HAP-1 (cell line): ENCODE measurements at regions of chr4 and their contacts with region 1.

Region 1: DNA sequence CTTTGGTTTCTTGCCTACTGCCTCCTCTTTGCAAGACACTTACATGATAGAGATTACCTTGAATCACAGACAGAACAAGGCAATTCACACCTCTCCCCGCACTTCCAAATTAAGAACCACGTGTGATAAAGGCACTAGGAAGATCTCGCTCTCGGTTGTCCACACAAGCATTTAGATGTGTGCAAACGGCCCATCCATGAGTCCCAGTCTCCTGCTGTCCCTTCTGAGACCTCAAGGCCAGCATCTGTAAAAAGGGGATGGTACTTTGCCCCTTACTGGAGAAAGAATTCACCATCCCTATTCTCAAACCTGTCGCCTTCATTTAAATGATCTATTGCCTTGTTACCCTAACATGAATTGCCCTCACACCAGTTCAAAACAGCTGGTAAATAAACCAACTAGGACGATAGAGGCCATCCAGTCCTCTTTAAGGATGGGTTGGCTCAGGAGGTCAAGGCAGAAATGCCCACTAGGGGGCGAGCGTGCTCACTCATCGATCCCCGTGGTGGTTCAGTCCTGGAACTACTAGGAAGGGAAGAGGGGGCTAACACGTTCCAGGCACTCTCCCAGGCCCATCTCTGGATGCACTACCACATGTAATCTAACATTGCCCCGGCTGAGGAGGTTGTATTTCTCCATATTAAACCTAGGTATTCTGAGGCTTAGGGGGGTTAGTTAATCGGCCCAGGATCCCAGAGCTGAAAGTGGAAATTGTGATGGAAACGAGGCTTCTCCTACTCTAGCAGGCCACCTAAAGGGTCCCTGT is 95.8 kb downstream of the DHX15 start:
- DNase-seq: peak; percentile 54 to 89
- H3K4me3 ChIP-seq: no peak overlapping the region
- H3K4me1 ChIP-seq: no peaks in the 10 kb centered on the region
- H3K27me3 ChIP-seq: no peaks in the 10 kb centered on the region

Region 2: DNA sequence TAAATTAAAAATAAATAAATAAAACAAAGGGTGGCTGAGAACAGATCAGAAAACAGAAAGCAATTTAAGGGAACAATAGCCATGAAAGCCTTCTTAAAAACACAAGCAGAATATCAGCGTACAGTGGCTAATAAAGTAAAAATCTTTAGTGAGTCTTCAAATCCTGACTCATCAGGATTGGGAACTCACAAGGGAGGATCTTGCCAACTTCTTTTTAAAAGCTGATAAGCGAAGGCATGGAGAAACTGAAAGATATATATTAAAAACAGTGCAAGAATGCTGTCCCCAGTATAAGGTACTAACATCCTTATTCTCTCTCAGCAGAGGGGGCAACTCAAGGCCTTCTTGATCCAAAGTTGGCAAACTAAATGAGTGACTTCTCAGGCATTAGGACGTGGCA is 84.3 kb before region 1 on chr4:
- in situ Hi-C with region 1: no loop called
- DNase-seq: no peak
- H3K4me3 ChIP-seq: no peak overlapping the region
- H3K4me1 ChIP-seq: no peaks in the 10 kb centered on the region
- H3K27me3 ChIP-seq: peaks cover 2% of the 10 kb centered on the region; the same call in 1 of the 2 replicates

Region 3: DNA sequence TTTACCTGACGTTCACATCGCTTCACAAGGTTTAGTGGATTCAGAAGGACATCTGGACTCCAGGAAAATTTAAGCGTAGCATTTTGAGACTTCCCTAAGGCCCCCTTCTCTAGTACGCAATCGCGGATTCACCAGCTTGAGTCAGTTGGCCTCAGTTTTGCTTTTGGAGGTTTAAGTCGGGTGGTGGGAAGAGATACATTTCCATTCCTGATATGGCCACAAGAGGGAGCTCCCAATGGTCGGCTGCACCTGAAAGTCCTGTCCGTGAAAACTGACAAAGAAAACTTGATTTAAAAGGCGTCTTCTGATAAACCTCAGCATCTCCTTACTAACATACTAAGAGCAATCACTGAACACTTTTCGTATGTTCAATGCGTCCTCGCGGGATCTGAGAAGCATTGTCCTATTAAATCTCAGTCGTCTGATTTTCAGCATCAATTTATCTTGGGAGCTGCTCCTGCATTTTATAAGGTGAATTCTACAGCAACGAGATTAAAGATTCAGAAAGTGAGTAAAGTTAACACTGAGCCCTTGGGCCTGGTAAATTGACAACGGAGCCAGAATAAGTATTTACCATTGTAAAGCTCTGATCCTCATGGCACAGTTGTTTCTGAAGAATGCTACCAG is 491.6 kb after region 1 on chr4:
- in situ Hi-C with region 1: loop called (anchors 10 kb)
- DNase-seq: peak; percentile 60 to 78
- H3K4me3 ChIP-seq: no peak overlapping the region
- H3K4me1 ChIP-seq: no peaks in the 10 kb centered on the region
- H3K27me3 ChIP-seq: peaks cover 11% of the 10 kb centered on the region

Region 4: DNA sequence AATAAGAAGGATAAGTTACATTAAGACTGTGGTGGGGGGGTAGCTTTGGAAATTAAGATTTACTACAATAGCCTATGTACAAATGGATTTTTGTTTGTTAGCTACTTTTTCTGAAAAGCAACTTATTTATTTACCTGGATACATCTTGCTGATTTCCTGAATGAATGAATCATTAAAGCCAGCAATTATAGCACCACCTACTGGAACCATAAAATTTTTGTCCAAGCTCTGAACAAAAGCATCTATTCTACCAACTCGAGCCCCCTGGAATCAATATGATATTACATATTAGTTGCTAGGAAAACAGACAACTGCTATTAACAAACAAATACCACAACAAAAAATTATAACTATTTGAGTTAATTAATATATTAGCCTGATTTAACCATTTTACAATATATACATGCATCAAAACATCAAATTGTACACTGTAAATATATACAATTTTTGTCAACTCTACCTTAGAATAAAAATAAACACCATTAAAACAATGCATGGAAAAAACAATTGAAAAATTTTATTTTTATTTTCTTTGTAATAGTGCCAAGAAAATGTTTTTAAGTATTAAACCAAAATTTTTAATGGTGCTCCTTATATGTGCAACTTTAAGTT is 656.4 kb after region 1 on chr4:
- in situ Hi-C with region 1: loop called (anchors 25 kb)
- DNase-seq: peak in 1 of 2 experiments; percentile 20
- H3K4me3 ChIP-seq: no peak overlapping the region
- H3K4me1 ChIP-seq: no peaks in the 10 kb centered on the region
- H3K27me3 ChIP-seq: no peaks in the 10 kb centered on the region